K562 (cell line): ENCODE measurements at regions of chr2 and their contacts with region 1.

Region 1: GRCh38 chr2:216064011-216064630 is 17.5 kb downstream of the PECR start:
- DNase-seq: no peak
- ATAC-seq: peak; percentile 57; the same call in 2 of the 3 replicates
- H3K4me3 ChIP-seq: no peak overlapping the region
- H3K27ac ChIP-seq: no peak overlapping the region
- H3K4me1 ChIP-seq: no peaks in the 10 kb centered on the region; a peak in 1 of 5 replicates
- H3K27me3 ChIP-seq: no peaks in the 10 kb centered on the region
- CTCF ChIP-seq: peak in 2 of 3 experiments; percentile 21 to 40; a peak in 3 of 6 replicates
- EP300 ChIP-seq: no peak
- POLR2A ChIP-seq: no peak
- RAD21 ChIP-seq: peak; percentile 24 to 52; a peak in 3 of 4 replicates

Region 2: GRCh38 chr2:215958257-215958656 is 105.9 kb before region 1 on chr2:
- CTCF ChIA-PET with region 1: no interaction called
- POLR2A ChIA-PET with region 1: no interaction called
- in situ Hi-C with region 1: no loop called
- intact Hi-C with region 1: no loop called
- DNase-seq: no peak
- ATAC-seq: no peak
- H3K4me3 ChIP-seq: no peak overlapping the region
- H3K27ac ChIP-seq: no peak overlapping the region
- H3K4me1 ChIP-seq: no peaks in the 10 kb centered on the region; a peak in 1 of 5 replicates
- H3K27me3 ChIP-seq: no peaks in the 10 kb centered on the region
- CTCF ChIP-seq: no peak
- EP300 ChIP-seq: no peak
- POLR2A ChIP-seq: no peak
- RAD21 ChIP-seq: no peak

Region 3: DNA sequence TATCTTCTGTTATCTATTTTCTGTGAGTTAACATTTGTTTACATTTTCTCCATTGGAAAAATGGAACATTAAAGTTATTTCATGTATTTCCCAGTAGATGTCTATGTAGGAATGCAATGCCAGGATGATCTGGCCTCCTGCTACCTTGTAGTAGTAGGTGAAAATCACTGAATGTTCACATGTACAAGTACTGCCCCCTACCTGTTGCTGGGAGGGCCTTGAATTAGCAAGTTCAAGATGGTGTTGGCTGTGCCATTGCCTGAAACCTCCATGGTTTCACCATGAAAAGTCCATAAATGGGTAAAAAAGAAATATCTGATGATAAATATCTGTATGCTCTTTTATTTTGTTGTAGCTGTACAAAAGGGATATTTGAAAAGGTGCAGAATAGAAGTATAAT is 75.8 kb after region 1 on chr2:
- CTCF ChIA-PET with region 1: no interaction called
- POLR2A ChIA-PET with region 1: no interaction called
- in situ Hi-C with region 1: no loop called
- intact Hi-C with region 1: loop called (anchors 1 kb)
- DNase-seq: peak; percentile 13 to 29 (median 26)
- ATAC-seq: peak; percentile 75; the same call in 2 of the 3 replicates
- H3K4me3 ChIP-seq: no peak overlapping the region
- H3K27ac ChIP-seq: no peak overlapping the region
- H3K4me1 ChIP-seq: no peaks in the 10 kb centered on the region
- H3K27me3 ChIP-seq: no peaks in the 10 kb centered on the region
- CTCF ChIP-seq: peak; percentile 24 to 39 (median 29); a peak in 2 of 6 replicates
- EP300 ChIP-seq: no peak
- POLR2A ChIP-seq: no peak
- RAD21 ChIP-seq: peak in 1 of 2 experiments; percentile 27; a peak in 1 of 4 replicates